Dendritic cell treated with granulocyte-macrophage colony-stimulating factor and Interleukin-4, amounts not matched to agents 40 ng/mL and 50 ng/mL, for 4 days (primary cell): ENCODE measurements at regions of chr5 and their contacts with region 1.

Region 1: GRCh38 chr5:157603333-157604190 is 28.0 kb upstream of the ADAM19 start:
- H3K4me3 Mint-ChIP-seq: no peak overlapping the region
- H3K27ac Mint-ChIP-seq: peak overlapping the region; percentile 64
- H3K4me1 Mint-ChIP-seq: peaks cover 67% of the 10 kb centered on the region
- H3K27me3 Mint-ChIP-seq: no peaks in the 10 kb centered on the region

Region 2: GRCh38 chr5:157198277-157198986 is 405.1 kb before region 1 on chr5:
- intact Hi-C with region 1: no loop called
- H3K4me3 Mint-ChIP-seq: no peak overlapping the region
- H3K27ac Mint-ChIP-seq: no peak overlapping the region
- H3K4me1 Mint-ChIP-seq: peaks cover 9% of the 10 kb centered on the region
- H3K27me3 Mint-ChIP-seq: peaks cover 14% of the 10 kb centered on the region

Region 3: GRCh38 chr5:157571357-157571827 is 32.2 kb before region 1 on chr5:
- intact Hi-C with region 1: loop called (anchors 5 kb)
- H3K4me3 Mint-ChIP-seq: peak overlapping the region; percentile 44
- H3K27ac Mint-ChIP-seq: peak overlapping the region; percentile 84
- H3K4me1 Mint-ChIP-seq: peaks cover 80% of the 10 kb centered on the region
- H3K27me3 Mint-ChIP-seq: peaks cover 14% of the 10 kb centered on the region

Region 4: GRCh38 chr5:157665467-157666100 is 62.0 kb after region 1 on chr5:
- intact Hi-C with region 1: loop called (anchors 10 kb)
- H3K4me3 Mint-ChIP-seq: no peak overlapping the region
- H3K27ac Mint-ChIP-seq: no peak overlapping the region
- H3K4me1 Mint-ChIP-seq: peaks cover 21% of the 10 kb centered on the region
- H3K27me3 Mint-ChIP-seq: peaks cover 31% of the 10 kb centered on the region